ENCODE measurements at regions of chr18 and their contacts with region 1.

Region 1: GRCh38 chr18:8765783-8766463 is 60.6 kb downstream of the MTCL1 start:
- DNase-seq: no peak
- ATAC-seq: peak in 1 of 4 donors; percentile 48
- H3K4me3 ChIP-seq: no peak overlapping the region
- H3K27ac ChIP-seq: peak overlapping the region in 1 of 12 donors; percentile 75
- H3K4me1 ChIP-seq: peaks cover 0 to 10% (median 0%) of the 10 kb centered on the region in 12 donors
- H3K27me3 ChIP-seq: no peaks in the 10 kb centered on the region
- CTCF ChIP-seq: no peak
- POLR2A ChIP-seq: no peak

Region 2: DNA sequence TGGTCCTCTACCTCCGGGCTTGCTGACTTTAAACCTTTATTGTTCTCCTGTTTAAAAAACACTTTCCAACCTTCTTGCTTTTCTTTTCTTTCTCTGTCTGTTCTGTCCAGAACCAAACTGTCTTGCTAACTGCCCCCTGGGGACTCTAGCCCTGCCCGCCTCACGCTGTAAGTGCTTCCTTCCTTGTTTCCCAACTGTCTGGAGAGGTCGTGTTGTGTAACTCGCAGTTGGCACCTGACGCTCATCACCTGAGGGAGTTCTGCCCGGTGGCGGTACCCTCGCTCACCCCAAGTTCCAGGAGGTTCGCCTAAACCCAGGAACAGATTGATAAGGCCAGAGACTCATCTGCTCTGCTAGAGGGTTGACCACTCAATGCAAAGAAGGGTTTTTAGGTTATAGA is 62.9 kb after region 1 on chr18:
- intact Hi-C with region 1: loop called in 1 of 10 experiments (anchors 10 kb)
- DNase-seq: no peak
- ATAC-seq: no peak
- H3K4me3 ChIP-seq: no peak overlapping the region
- H3K27ac ChIP-seq: peak overlapping the region in 3 of 12 donors; percentile 35 to 49 (median 36)
- H3K4me1 ChIP-seq: peaks cover 0 to 17% (median 0%) of the 10 kb centered on the region in 12 donors
- H3K27me3 ChIP-seq: no peaks in the 10 kb centered on the region
- CTCF ChIP-seq: no peak
- POLR2A ChIP-seq: no peak

Measured in heart left ventricle (tissue), 16 donors.